ENCODE measurements at regions of chr18 and their contacts with region 1.

Region 1: GRCh38 chr18:66560092-66560491 is 43.8 kb downstream of the CDH19 start:
- H3K4me3 Mint-ChIP-seq: no peak overlapping the region
- H3K27ac Mint-ChIP-seq: no peak overlapping the region
- H3K4me1 Mint-ChIP-seq: no peaks in the 10 kb centered on the region
- H3K27me3 Mint-ChIP-seq: no peaks in the 10 kb centered on the region

Region 2: GRCh38 chr18:66495844-66496243 is 64.2 kb before region 1 on chr18:
- intact Hi-C with region 1: no loop called
- H3K4me3 Mint-ChIP-seq: no peak overlapping the region
- H3K27ac Mint-ChIP-seq: no peak overlapping the region
- H3K4me1 Mint-ChIP-seq: no peaks in the 10 kb centered on the region
- H3K27me3 Mint-ChIP-seq: no peaks in the 10 kb centered on the region

Region 3: DNA sequence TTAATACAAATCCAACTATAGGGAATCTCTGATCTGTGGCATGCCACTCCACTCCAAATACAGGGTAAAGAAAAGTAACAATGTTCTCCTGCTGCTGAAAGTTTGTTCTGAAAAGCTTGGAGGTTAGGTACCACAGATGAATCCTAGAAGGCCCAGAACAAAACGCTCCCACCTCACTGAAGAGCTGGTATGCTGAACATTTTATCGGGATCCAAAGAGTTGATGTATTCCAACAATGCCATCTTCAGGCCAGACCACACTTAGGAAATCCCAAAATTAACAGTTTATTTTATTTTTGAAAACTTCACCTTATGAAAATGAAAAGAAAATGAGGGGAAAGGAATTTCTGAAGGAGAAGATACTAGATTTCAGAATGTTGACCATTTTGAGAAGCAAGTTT is 188.9 kb after region 1 on chr18:
- intact Hi-C with region 1: loop called (anchors 1 kb)
- H3K4me3 Mint-ChIP-seq: no peak overlapping the region
- H3K27ac Mint-ChIP-seq: no peak overlapping the region
- H3K4me1 Mint-ChIP-seq: no peaks in the 10 kb centered on the region
- H3K27me3 Mint-ChIP-seq: no peaks in the 10 kb centered on the region

Region 4: DNA sequence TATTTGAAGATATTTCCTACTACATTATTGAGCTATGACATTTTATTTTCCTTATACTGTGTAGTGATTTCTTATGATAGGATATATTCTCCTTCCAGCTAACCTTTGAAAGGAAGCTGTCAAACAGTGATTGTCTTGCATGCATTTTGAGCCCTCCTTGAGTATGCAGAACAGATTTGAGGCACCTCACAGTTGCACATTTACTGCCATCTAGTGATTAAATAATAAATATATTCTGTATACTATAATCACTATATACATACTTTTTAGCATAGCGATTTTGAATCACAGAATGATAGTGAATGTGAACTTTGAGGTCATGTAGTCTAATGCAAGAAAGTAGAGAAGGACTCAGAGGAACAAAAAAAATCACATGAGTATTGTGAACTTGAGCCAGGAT is 312.2 kb after region 1 on chr18:
- intact Hi-C with region 1: loop called (anchors 2 kb)
- H3K4me3 Mint-ChIP-seq: no peak overlapping the region
- H3K27ac Mint-ChIP-seq: no peak overlapping the region
- H3K4me1 Mint-ChIP-seq: no peaks in the 10 kb centered on the region
- H3K27me3 Mint-ChIP-seq: no peaks in the 10 kb centered on the region

Region 5: GRCh38 chr18:67199993-67200617 is 640.0 kb after region 1 on chr18:
- intact Hi-C with region 1: loop called (anchors 5 kb)
- H3K4me3 Mint-ChIP-seq: no peak overlapping the region
- H3K27ac Mint-ChIP-seq: no peak overlapping the region
- H3K4me1 Mint-ChIP-seq: no peaks in the 10 kb centered on the region
- H3K27me3 Mint-ChIP-seq: no peaks in the 10 kb centered on the region